Left cardiac atrium (tissue), 4 donors: ENCODE measurements at regions of chr15 and their contacts with region 1.

Region 1: DNA sequence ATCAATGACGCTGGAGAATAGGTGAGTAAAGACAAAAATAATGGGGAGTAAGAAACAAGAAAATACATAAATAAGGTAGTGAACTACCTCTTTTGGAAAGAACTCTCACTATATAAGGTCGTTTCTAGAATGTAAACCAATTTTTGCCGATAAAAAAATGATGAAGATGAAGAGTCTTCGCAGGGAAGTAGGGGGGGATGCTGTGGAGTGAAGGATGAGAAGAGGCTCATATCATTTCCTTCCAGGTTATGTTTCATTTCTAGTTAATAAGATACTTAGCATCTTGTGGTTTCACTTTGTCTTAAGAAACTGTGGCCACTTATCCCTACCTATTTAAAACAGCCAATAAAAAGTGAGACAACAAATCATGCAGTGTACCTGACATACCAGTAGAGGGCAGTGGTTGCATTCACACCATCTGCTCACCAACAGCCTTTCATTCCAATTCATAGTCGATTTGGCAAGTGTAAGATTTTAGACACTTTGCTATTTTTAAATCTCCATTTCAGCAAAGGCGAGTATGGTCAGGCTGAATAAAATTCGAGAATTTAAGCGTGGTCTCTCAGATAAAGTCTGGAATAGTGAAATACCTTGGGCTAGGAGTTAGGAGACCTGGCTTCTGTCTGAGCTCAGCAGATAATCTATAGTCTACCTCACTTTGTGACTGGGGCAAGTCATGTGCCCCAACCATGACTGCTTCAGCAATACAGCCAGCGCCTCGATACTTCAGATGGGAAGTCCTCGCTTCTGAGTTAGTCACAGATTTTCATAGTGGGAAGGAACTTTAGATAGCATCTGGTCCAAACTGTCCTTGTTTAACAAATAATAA is 28.9 kb upstream of the ICE2 start:
- DNase-seq: no peak
- ATAC-seq: peak; percentile 72 to 78

Region 2: GRCh38 chr15:60563539-60564404 is 56.0 kb after region 1 on chr15:
- intact Hi-C with region 1: no loop called
- DNase-seq: no peak
- ATAC-seq: no peak

Region 3: GRCh38 chr15:60573936-60574335 is 66.1 kb after region 1 on chr15:
- intact Hi-C with region 1: loop called in 1 of 2 experiments (anchors 10 kb)
- DNase-seq: no peak
- ATAC-seq: no peak

Region 4: DNA sequence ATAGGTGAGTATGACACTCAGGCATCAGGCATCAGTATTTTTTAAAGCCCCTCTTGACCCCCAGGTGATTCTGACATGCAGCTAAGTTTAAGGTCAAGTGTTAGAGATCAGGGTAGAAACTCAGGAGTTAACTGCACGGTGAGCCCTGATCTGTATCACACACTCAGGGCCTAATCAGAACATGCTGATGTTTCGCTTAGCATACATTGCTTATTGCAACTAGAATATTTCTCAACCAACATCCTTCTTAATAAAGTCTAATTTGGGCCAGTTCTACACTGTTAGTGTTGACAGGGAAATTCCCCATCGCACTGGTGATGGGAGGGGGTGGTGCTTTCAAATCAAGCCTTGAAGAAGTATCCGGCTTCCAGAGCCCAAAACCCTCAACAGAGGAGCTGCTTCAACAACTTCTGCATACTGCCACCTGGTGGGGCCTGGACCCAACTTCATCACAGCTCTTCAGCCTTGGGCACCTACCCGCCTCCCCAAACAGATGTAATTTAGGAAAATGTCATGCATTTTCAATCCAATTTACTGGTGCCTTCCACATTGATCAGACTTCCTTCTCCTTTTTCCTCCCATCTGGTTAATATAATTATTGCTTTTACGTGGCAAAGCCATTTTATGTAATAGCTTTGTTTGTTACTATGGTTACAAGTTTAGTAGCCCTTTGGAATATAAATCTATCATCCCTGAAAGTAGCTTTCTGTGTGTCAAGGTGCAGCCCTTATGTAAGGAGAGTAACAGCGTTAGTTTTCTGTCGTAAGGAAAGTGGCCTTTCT is 409.1 kb after region 1 on chr15:
- intact Hi-C with region 1: loop called in 1 of 2 experiments (anchors 5 kb)
- DNase-seq: peak; percentile 91
- ATAC-seq: peak; percentile 89 to 93

Region 5: DNA sequence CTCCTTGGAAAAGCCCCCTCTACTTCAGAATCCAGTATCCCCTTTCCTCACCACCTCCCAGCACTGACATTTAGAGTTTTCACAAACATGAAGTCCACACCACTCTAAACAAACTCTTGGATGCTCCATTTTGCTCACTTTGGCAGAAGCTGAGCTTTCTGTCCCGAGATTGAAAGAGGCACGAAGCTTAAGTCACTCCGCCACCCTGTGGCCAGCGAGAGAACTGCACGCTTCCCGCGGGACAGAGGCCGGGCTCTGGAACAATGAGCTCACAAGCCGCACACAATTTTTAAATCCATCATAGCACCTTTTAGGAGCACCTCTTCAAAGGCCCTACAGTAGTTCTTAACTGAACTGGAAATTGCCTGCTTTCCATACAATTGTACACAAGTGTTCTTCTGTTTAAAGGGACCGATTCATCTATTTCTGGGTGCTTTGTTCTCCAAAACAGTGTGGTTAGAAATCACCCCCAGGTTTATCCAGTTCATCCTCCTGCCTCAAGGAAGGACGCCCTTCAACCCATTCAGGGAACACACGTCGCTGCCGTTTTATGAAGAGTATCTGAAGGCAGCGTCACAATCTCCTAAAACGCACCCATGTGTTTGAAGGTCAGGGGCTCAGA is 1326.4 kb after region 1 on chr15:
- intact Hi-C with region 1: loop called in 1 of 2 experiments (anchors 5 kb)
- DNase-seq: peak; percentile 79
- ATAC-seq: peak; percentile 79 to 85